ENCODE measurements at regions of chr11 and their contacts with region 1.

Region 1: DNA sequence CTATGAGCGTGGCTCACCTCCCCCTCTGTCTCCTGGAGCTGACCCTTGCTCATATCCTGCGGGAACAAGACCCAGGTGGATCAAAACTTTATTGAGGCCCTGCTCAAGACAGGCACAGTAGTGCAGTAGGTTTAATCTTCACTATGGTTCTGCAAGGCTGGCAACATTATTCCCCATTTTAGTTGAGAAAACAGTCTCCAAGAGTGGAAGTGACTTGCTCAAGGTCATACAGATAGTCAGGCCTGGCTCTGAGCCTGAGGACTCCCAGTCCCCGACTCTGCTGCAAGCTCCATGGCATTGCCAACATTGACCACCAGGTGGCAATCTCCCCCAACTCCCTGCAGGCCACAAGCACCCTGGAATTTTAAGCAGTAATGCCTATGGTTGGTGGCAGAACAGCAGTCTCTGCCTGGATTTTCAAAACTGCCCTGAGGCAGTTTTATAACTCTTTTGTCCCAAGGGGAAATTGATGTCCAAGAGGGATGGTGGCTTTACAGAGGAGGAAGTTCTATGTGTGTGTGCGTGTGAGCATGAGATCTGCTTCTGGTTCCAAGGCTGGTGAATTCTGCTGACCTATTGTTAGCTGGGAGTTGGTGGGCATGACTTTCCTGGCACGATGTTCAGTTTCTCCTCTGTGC is 34.1 kb downstream of the NEU3 start:
- DNase-seq: peak; percentile 82
- ATAC-seq: peak; percentile 96
- H3K4me3 ChIP-seq: no peak overlapping the region
- H3K27ac ChIP-seq: no peak overlapping the region
- H3K4me1 ChIP-seq: no peaks in the 10 kb centered on the region
- H3K27me3 ChIP-seq: no peaks in the 10 kb centered on the region
- CTCF ChIP-seq: peak; percentile 99

Region 2: DNA sequence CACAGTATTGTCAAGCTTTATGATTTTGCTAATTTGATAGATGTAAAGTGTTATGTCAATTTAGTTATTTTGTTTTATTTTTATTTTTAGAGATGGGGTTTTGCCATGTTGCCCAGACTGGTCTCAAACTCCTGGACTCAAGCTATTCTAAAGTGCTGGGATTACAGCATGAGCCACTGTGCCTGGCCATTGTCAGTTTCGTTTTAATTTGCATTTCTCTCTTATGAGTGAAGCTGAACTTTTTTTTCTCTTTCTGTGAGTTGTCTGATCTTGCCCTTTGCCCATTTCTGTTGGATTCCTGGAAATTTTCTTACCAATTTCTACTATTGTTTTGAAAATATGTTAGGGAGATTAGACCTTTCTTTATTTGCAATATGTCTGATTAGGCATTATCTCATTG is 18.7 kb before region 1 on chr11:
- CTCF ChIA-PET with region 1: no interaction called
- POLR2A ChIA-PET with region 1: no interaction called
- in situ Hi-C with region 1: no loop called
- intact Hi-C with region 1: no loop called
- DNase-seq: no peak
- ATAC-seq: no peak
- H3K4me3 ChIP-seq: no peak overlapping the region
- H3K27ac ChIP-seq: no peak overlapping the region
- H3K4me1 ChIP-seq: no peaks in the 10 kb centered on the region
- H3K27me3 ChIP-seq: no peaks in the 10 kb centered on the region
- CTCF ChIP-seq: no peak

Region 3: DNA sequence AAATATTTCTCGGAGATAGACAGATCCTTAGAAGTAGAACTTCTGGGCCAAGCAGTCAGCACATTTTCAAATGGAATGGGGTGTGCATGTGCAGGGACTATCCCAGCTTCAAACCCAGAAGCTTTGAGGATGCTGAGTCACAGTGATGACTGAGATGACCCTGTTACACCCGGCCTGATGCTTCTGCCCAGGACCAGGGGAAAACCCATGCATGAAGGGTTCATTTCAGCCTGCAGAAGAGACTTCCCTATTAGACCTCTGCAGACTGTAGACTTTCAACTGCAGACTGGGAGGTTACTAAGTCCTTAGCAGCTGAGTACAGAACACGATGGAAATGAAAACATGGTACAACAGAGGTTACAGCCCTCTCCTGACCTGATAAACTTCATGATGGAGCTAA is 77.4 kb after region 1 on chr11:
- CTCF ChIA-PET with region 1: no interaction called
- POLR2A ChIA-PET with region 1: no interaction called
- in situ Hi-C with region 1: loop called (anchors 25 kb)
- intact Hi-C with region 1: no loop called
- DNase-seq: no peak
- ATAC-seq: peak; percentile 82
- H3K4me3 ChIP-seq: no peak overlapping the region
- H3K27ac ChIP-seq: no peak overlapping the region
- H3K4me1 ChIP-seq: no peaks in the 10 kb centered on the region
- H3K27me3 ChIP-seq: peaks cover 6% of the 10 kb centered on the region
- CTCF ChIP-seq: no peak

Region 4: DNA sequence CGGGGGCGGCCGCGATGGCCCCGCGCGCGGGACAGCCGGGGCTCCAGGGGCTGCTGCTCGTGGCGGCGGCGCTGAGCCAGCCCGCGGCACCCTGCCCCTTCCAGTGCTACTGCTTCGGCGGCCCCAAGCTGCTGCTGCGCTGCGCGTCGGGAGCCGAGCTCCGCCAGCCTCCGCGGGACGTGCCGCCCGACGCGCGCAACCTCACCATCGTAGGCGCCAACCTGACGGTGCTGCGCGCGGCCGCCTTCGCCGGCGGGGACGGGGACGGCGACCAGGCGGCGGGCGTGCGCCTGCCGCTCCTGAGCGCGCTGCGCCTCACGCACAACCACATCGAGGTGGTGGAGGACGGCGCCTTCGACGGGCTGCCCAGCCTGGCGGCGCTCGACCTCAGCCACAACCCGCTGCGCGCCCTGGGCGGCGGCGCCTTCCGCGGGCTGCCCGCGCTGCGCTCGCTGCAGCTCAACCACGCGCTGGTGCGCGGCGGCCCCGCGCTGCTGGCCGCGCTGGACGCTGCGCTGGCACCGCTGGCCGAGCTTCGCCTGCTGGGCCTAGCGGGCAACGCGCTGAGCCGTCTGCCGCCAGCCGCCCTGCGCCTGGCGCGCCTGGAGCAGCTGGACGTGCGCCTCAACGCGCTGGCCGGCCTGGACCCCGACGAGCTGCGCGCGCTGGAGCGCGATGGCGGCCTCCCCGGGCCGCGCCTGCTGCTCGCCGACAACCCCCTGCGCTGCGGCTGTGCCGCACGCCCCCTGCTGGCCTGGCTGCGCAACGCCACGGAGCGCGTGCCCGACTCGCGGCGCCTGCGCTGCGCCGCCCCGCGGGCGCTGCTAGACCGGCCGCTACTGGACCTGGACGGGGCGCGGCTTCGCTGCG is 218.4 kb after region 1 on chr11:
- CTCF ChIA-PET with region 1: interaction called, 9 read pairs
- POLR2A ChIA-PET with region 1: no interaction called
- in situ Hi-C with region 1: loop called (anchors 25 kb)
- intact Hi-C with region 1: no loop called
- DNase-seq: peak; percentile 60
- ATAC-seq: peak; percentile 92
- H3K4me3 ChIP-seq: peak overlapping the region; percentile 42 to 53
- H3K27ac ChIP-seq: no peak overlapping the region
- H3K4me1 ChIP-seq: no peaks in the 10 kb centered on the region
- H3K27me3 ChIP-seq: no peaks in the 10 kb centered on the region; the same call in 1 of the 2 replicates
- CTCF ChIP-seq: peak; percentile 100

Region 5: GRCh38 chr11:75248690-75249268 is 225.9 kb after region 1 on chr11:
- CTCF ChIA-PET with region 1: interaction called, 27 read pairs
- POLR2A ChIA-PET with region 1: no interaction called
- in situ Hi-C with region 1: loop called (anchors 25 kb)
- intact Hi-C with region 1: loop called (anchors 1 kb)
- DNase-seq: peak; percentile 89
- ATAC-seq: peak; percentile 88
- H3K4me3 ChIP-seq: no peak overlapping the region
- H3K27ac ChIP-seq: no peak overlapping the region
- H3K4me1 ChIP-seq: peaks cover 3% of the 10 kb centered on the region; the same call in 1 of the 2 replicates
- H3K27me3 ChIP-seq: no peaks in the 10 kb centered on the region
- CTCF ChIP-seq: peak; percentile 100

Region 6: DNA sequence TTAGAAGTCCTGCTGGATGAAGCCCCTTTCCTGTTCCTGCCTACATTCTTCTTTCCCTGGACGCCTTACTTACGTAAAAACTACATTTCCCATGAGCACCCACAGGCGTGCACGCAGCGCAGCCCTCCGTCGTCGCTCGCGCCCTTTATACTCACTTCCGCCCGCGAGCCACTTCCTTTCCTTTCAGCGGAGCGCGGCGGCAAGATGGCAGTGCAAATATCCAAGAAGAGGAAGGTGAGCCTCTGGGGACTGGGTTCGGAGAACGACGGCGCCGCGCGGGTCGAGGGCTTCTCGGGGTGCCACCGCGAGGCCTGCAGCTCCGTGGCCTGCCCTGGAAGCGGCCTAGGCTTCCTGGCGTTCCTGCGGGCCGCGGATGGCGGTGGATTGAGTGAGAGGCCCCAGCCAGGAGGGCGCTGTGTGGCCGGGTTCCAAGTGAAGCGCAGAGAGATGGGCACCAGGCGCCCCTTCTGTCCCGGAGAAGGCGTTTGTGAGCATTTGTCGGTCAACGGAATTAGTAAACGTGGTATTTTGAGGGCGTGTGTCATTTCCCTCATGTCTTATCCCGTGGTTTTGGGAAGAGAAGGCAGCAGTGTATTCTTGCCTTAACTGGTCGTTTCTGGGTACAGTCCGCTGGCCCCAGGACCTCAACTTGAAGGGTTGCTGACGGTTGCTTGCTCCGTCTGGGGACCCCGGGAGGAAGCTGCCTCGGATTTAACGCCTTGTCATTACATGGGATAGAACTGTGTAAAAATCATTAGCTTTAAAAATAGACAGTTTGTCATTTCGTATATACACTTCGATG is 376.7 kb after region 1 on chr11 and contains the start of gene RPS3:
- CTCF ChIA-PET with region 1: no interaction called
- POLR2A ChIA-PET with region 1: interaction called, 12 read pairs
- in situ Hi-C with region 1: no loop called
- intact Hi-C with region 1: no loop called
- DNase-seq: peak; percentile 69
- ATAC-seq: peak; percentile 97
- H3K4me3 ChIP-seq: peak within 1 kb of the TSS; percentile 78 to 85
- H3K27ac ChIP-seq: peak within 1 kb of the TSS; percentile 99
- H3K4me1 ChIP-seq: peaks cover 29% of the 10 kb centered on the region
- H3K27me3 ChIP-seq: no peaks in the 10 kb centered on the region
- CTCF ChIP-seq: no peak; the same call in 1 of the 2 replicates
- total RNA-seq, gene RPS3: 2,945 TPM